Heart right ventricle (tissue), 16 donors: ENCODE measurements at regions of chr19 and their contacts with region 1.

Region 1: GRCh38 chr19:49264258-49264657 is 60.7 kb downstream of the SLC6A16 start:
- DNase-seq: no peak
- ATAC-seq: no peak
- H3K4me3 ChIP-seq: no peak overlapping the region
- H3K27ac ChIP-seq: no peak overlapping the region
- H3K4me1 ChIP-seq: no peaks in the 10 kb centered on the region
- H3K27me3 ChIP-seq: peaks cover 0 to 7% (median 0%) of the 10 kb centered on the region in 7 donors
- CTCF ChIP-seq: no peak

Region 2: DNA sequence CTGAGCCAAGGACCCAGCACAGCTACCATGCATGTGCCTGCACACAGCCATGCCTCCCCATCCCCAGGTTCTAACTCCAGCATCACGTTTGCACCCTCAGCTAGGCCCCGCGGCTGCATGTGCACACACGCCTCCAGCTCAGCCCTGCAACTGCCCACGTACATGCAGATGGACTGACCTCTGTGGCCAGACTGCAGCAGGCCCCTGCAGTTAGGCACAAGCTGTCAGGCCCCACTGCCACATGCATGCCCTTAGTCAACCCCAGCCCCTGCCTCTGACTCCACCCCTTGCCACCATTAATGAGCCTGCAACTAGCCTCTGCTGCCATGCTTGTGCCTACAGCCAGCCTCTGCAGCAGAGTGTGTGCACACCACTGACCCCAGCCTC is 37.6 kb after region 1 on chr19:
- intact Hi-C with region 1: no loop called
- DNase-seq: no peak
- ATAC-seq: peak in 1 of 8 donors; percentile 44
- H3K4me3 ChIP-seq: no peak overlapping the region
- H3K27ac ChIP-seq: no peak overlapping the region
- H3K4me1 ChIP-seq: peaks cover 0 to 5% (median 0%) of the 10 kb centered on the region in 9 donors
- H3K27me3 ChIP-seq: no peaks in the 10 kb centered on the region
- CTCF ChIP-seq: no peak

Region 3: DNA sequence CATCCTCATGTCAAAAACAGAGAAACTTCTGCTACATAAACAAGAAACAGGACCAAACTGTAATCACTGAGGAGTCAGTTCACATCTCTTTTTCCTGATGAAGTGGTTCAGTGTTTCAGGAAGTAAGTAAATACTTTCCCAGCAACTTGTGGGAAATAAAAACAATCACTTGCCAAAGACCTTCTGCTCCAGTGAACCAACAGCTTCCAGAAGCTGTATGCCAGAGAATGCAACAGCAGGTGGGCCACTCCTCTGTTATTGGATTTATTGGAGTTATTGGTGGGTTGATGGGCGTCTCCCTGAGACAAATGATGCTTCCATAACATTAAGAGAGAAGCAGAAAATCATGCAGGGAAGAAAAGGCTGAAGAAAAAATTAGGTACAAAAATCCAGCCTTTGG is 50.9 kb after region 1 on chr19:
- intact Hi-C with region 1: loop called in 1 of 10 experiments (anchors 10 kb)
- DNase-seq: no peak
- ATAC-seq: no peak
- H3K4me3 ChIP-seq: no peak overlapping the region
- H3K27ac ChIP-seq: no peak overlapping the region
- H3K4me1 ChIP-seq: peaks cover 0 to 9% (median 0%) of the 10 kb centered on the region in 9 donors
- H3K27me3 ChIP-seq: no peaks in the 10 kb centered on the region
- CTCF ChIP-seq: no peak

Region 4: GRCh38 chr19:49443366-49444099 is 179.3 kb after region 1 on chr19:
- intact Hi-C with region 1: loop called in 1 of 10 experiments (anchors 10 kb)
- DNase-seq: peak; percentile 94 to 96
- ATAC-seq: peak; percentile 86 to 95 (median 93)
- H3K4me3 ChIP-seq: peak overlapping the region; percentile 60 to 93 (median 69)
- H3K27ac ChIP-seq: peak overlapping the region; percentile 55 to 92 (median 86)
- H3K4me1 ChIP-seq: peaks cover 0 to 23% (median 6%) of the 10 kb centered on the region in 9 donors
- H3K27me3 ChIP-seq: peaks cover 8 to 40% (median 36%) of the 10 kb centered on the region in 7 donors
- CTCF ChIP-seq: peak; percentile 65 to 89 (median 80)